Activated CD4-positive, alpha-beta T cell treated with anti-CD3 and anti-CD28 coated beads, Interleukin-2, amount 10 ng/mL, durations not matched to agents 7 days and 5 days (primary cell): ENCODE measurements at regions of chr19 and their contacts with region 1.

Region 1: GRCh38 chr19:58326914-58327726 is at the start of gene ZSCAN22:
- DNase-seq: peak; percentile 93
- H3K4me3 Mint-ChIP-seq: no peak within 1 kb of the TSS
- H3K27ac Mint-ChIP-seq: no peak within 1 kb of the TSS
- H3K4me1 Mint-ChIP-seq: no peaks in the 10 kb centered on the region
- H3K27me3 Mint-ChIP-seq: no peaks in the 10 kb centered on the region
- total RNA-seq, gene ZSCAN22: 4.3 to 5.0 TPM

Region 2: DNA sequence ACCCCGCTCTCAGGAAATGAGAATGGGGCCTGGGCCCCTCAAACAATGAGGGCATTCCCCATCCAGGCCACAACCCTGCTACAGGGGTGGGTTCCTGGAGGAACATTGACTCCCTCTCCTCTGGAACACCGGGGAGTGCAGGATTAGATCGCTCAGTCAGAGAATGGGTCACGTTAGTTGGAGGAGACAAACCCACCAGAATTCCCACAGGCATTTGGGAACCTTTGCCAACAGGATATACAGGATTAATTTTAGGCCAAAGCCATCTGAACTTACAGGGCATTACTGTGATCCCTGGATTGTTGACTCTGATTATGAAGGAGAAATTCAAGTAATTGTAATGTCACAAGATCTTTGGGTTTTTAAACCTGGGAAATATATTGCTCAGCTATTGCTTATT is 19.4 kb before region 1 on chr19:
- CTCF ChIA-PET with region 1: interaction called, 12 read pairs
- POLR2A ChIA-PET with region 1: no interaction called
- DNase-seq: no peak
- H3K4me3 Mint-ChIP-seq: no peak overlapping the region
- H3K27ac Mint-ChIP-seq: no peak overlapping the region
- H3K4me1 Mint-ChIP-seq: peaks cover 44% of the 10 kb centered on the region
- H3K27me3 Mint-ChIP-seq: no peaks in the 10 kb centered on the region